OCI-LY7 (cell line): ENCODE measurements at regions of chr1 and their contacts with region 1.

Region 1: DNA sequence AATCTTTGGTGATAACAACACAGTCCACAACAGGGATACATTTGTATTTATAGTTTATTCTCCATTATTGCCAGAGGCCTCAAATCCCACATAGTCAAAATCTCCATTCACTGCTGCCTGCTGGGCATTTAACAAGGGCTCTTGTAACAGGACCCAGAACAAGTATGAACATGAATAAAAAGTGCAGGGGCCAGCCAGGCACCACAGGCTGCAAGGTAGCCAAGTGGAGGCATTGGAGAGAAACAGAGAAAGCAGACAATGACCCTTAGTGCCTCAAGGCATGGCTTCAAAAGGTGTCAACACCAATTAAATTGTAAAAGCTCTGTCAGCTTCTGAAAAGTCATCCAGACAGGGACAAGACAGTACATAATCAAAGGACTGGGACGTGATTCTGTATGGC is 116.8 kb downstream of the ATP6V1G3 start:
- DNase-seq: no peak
- H3K4me3 ChIP-seq: no peak overlapping the region
- H3K27ac ChIP-seq: no peak overlapping the region
- H3K4me1 ChIP-seq: no peaks in the 10 kb centered on the region
- CTCF ChIP-seq: no peak

Region 2: GRCh38 chr1:198408716-198409115 is 15.0 kb before region 1 on chr1:
- CTCF ChIA-PET with region 1: no interaction called
- POLR2A ChIA-PET with region 1: interaction called, 13 read pairs
- intact Hi-C with region 1: no loop called
- DNase-seq: no peak
- H3K4me3 ChIP-seq: no peak overlapping the region
- H3K27ac ChIP-seq: no peak overlapping the region
- H3K4me1 ChIP-seq: no peaks in the 10 kb centered on the region
- CTCF ChIP-seq: no peak

Region 3: GRCh38 chr1:198481661-198482060 is 58.0 kb after region 1 on chr1:
- CTCF ChIA-PET with region 1: no interaction called
- POLR2A ChIA-PET with region 1: no interaction called
- intact Hi-C with region 1: no loop called
- DNase-seq: no peak
- H3K4me3 ChIP-seq: no peak overlapping the region
- H3K27ac ChIP-seq: no peak overlapping the region
- H3K4me1 ChIP-seq: no peaks in the 10 kb centered on the region
- CTCF ChIP-seq: no peak